ENCODE measurements at regions of chr2 and their contacts with region 1.

Region 1: DNA sequence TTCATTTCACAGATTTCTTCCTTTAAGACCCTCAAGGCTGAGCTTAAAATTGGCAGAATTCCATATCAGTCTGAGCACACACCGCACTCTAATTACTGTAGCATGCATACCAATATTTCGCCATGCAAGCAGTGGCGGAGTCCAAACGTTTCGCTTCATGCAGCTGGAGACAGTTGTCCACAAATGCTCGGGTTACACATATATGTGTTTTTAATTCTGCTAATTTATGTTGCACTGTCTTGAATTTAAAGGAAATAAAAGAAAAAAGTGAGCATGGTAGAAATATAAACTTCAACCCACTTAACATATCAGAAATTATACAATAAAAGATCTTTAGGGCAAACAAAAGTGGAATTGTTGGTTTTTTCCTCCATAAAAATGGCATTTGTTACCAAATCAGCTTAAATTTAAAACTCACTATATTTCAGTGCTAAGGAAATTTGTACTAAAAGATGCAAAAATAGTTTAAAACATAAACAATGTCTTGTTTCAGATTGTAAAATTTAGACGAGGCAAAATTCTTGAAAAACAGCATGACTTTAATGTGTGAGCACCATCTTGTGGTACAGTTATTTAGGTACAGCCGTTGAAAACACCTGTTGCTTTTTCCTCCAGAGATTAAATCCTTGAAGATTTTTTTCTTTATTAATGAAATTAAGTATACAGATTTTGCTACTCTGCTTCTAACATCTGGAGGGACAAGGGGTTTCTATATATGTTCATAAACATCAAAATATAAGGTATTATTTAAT is 24.1 kb upstream of the KANSL1L start:
- DNase-seq: no peak
- H3K4me3 ChIP-seq: no peak overlapping the region
- H3K27ac ChIP-seq: no peak overlapping the region
- H3K4me1 ChIP-seq: no peaks in the 10 kb centered on the region
- H3K27me3 ChIP-seq: no peaks in the 10 kb centered on the region
- CTCF ChIP-seq: peak; percentile 27 to 66 (median 64)
- POLR2A ChIP-seq: no peak

Region 2: DNA sequence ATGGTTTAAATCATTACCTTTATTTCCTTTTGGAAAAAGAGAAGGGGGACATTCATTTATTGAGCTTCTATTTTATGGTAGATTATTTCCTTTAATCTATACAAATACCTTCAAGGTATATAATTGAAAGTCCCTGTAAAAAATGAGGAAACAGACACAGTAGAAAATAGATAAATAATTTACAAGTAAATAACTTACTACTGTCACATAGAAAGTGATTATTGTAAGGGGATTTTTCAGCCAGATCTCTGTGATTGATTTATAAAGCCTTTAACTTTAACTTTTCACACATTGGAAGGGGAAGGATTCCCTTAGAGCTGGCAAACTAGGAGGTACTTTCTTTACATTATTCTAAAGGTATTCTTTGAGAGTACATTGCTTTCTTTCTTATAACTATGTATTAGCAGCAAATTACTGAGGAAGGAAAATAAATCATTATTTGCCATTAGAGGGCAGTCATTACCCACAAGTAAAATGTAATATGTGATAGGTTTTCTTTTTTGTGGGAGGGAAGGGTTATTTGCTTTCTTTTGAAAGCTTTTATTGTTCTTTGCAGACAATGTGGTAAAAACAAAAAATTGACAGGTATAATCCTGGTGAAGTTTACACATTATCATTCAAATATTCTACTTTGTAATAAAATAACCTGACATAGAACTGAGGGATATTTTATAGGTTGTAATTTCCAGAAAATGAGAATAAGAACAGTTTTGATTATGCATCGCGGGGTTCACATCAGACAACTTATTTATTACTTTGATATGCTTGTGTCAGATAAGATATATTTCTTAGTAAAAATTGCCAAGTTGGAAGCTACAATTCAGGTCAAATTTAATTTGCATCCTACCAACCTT is 217.7 kb before region 1 on chr2:
- intact Hi-C with region 1: loop called (anchors 10 kb)
- DNase-seq: no peak
- H3K4me3 ChIP-seq: no peak overlapping the region
- H3K27ac ChIP-seq: no peak overlapping the region
- H3K4me1 ChIP-seq: no peaks in the 10 kb centered on the region
- H3K27me3 ChIP-seq: no peaks in the 10 kb centered on the region
- CTCF ChIP-seq: peak in 1 of 3 experiments; percentile 22
- POLR2A ChIP-seq: no peak

Region 3: DNA sequence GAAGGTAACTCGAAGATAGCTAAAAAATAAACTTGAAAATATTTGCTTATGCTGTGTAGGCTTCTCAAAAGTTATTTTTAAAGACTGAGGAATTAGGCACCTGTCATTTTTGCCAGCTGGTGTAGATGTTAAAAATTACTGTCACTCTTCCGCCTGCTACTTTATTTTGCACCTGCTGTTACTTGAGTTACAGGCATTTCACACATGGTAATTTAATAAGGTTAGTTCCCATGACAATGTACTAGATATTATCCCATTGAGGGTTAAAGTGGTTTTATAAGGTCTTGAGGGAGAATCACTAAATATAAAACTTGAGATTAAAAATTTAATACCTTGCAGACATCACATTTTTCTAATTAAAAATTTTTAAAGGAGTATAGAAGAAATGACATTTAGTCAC is 93.1 kb after region 1 on chr2:
- intact Hi-C with region 1: no loop called
- DNase-seq: no peak
- H3K4me3 ChIP-seq: no peak overlapping the region
- H3K27ac ChIP-seq: no peak overlapping the region
- H3K4me1 ChIP-seq: no peaks in the 10 kb centered on the region
- H3K27me3 ChIP-seq: no peaks in the 10 kb centered on the region
- CTCF ChIP-seq: no peak
- POLR2A ChIP-seq: no peak

Region 4: DNA sequence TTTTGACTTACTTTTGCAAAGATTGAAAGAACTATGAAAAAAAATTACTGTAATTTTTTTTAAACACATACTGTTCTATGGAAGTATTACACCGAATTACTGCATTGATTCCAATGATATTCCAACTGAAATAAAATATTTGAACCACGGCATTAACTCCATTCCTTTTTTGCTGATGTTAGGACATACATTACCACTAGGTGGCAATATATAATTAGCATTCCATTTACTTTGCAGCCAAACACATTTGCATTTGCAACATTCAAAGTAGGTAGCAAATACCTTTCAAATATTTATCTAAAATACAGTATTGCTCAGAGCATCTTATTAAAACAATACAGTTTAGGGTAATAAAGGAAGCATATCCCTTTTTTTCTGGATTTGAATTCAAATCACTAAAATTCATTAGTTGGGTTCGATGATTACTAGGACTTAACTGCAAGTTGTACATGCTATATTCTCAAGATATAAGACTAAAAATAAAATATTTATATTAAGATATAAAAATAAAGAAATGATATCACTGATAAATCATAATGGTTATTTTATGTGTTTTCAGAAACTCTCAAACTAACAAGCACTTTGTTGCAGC is 249.9 kb after region 1 on chr2:
- intact Hi-C with region 1: no loop called
- DNase-seq: no peak
- H3K4me3 ChIP-seq: no peak overlapping the region
- H3K27ac ChIP-seq: no peak overlapping the region
- H3K4me1 ChIP-seq: no peaks in the 10 kb centered on the region
- H3K27me3 ChIP-seq: no peaks in the 10 kb centered on the region
- CTCF ChIP-seq: peak in 2 of 3 experiments; percentile 52 to 81
- POLR2A ChIP-seq: no peak

Measured in testis (tissue), 5 donors.